ENCODE measurements at regions of chr9 and their contacts with region 1.

Region 1: GRCh38 chr9:96566498-96567207 is 53.0 kb downstream of the CDC14B start:
- DNase-seq: peak; percentile 85
- ATAC-seq: peak; percentile 95
- H3K4me3 Mint-ChIP-seq: peak overlapping the region; percentile 79
- H3K27ac Mint-ChIP-seq: peak overlapping the region; percentile 67
- H3K4me1 Mint-ChIP-seq: peaks cover 26% of the 10 kb centered on the region
- H3K27me3 Mint-ChIP-seq: peaks cover 3% of the 10 kb centered on the region

Region 2: GRCh38 chr9:96391021-96391765 is 175.5 kb before region 1 on chr9:
- CTCF ChIA-PET with region 1: no interaction called
- DNase-seq: peak; percentile 33
- ATAC-seq: peak; percentile 51
- H3K4me3 Mint-ChIP-seq: no peak overlapping the region
- H3K27ac Mint-ChIP-seq: peak overlapping the region; percentile 62
- H3K4me1 Mint-ChIP-seq: peaks cover 12% of the 10 kb centered on the region
- H3K27me3 Mint-ChIP-seq: no peaks in the 10 kb centered on the region

Region 3: DNA sequence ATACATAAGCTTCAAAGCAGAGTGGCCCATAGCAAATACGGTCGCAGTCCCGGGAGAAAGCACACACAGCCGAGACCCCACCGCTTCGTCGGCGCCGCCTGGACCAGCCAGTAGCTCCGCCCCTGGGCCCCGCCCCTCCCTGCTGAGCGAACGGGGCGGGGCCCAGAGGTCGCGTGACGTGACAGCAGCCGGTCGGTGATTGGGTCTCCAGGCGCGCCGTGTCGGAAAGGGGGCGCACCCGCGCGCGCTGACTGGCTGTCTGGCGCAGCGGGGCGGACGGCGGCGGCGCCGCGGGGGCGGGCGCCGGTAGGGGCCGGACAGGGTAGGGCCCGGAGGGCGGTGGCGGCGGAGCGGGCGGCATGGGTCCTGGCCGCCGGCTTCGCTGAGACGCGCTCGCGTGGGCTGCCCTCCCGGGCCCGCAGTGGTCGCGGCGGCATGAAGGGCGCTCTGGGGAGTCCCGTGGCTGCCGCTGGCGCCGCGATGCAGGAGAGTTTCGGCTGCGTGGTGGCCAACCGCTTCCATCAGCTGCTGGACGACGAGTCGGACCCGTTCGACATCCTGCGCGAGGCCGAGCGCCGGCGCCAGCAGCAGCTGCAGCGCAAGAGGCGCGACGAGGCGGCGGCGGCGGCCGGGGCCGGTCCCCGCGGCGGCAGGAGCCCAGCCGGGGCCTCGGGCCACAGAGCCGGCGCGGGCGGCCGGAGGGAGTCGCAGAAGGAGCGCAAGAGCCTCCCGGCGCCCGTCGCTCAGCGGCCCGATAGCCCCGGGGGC is 116.6 kb before region 1 on chr9 and contains the start of gene HABP4:
- CTCF ChIA-PET with region 1: interaction called, 13 read pairs
- DNase-seq: peak; percentile 97
- ATAC-seq: peak; percentile 99
- H3K4me3 Mint-ChIP-seq: peak within 1 kb of the TSS; percentile 83
- H3K27ac Mint-ChIP-seq: peak within 1 kb of the TSS; percentile 66
- H3K4me1 Mint-ChIP-seq: peaks cover 26% of the 10 kb centered on the region
- H3K27me3 Mint-ChIP-seq: peaks cover 5% of the 10 kb centered on the region
- total RNA-seq, gene HABP4: 7.7 to 11.6 TPM